Aorta (tissue), 5 donors: ENCODE measurements at regions of chr5 and their contacts with region 1.

Region 1: GRCh38 chr5:142922223-142922952 is 152.2 kb downstream of the ARHGAP26 start:
- DNase-seq: no peak
- ATAC-seq: peak; percentile 75
- H3K4me3 ChIP-seq: no peak overlapping the region
- H3K27ac ChIP-seq: no peak overlapping the region
- H3K4me1 ChIP-seq: peaks cover 0 to 2% of the 10 kb centered on the region in 2 donors
- H3K27me3 ChIP-seq: no peaks in the 10 kb centered on the region

Region 2: GRCh38 chr5:143041972-143042770 is 119.8 kb after region 1 on chr5:
- intact Hi-C with region 1: no loop called
- DNase-seq: no peak
- ATAC-seq: peak; percentile 59
- H3K4me3 ChIP-seq: no peak overlapping the region
- H3K27ac ChIP-seq: no peak overlapping the region
- H3K4me1 ChIP-seq: no peaks in the 10 kb centered on the region
- H3K27me3 ChIP-seq: no peaks in the 10 kb centered on the region

Region 3: GRCh38 chr5:143213851-143214363 is 291.5 kb after region 1 on chr5:
- intact Hi-C with region 1: no loop called
- DNase-seq: no peak
- ATAC-seq: no peak
- H3K4me3 ChIP-seq: no peak overlapping the region
- H3K27ac ChIP-seq: no peak overlapping the region
- H3K4me1 ChIP-seq: peaks cover 0 to 3% of the 10 kb centered on the region in 2 donors
- H3K27me3 ChIP-seq: no peaks in the 10 kb centered on the region

Region 4: DNA sequence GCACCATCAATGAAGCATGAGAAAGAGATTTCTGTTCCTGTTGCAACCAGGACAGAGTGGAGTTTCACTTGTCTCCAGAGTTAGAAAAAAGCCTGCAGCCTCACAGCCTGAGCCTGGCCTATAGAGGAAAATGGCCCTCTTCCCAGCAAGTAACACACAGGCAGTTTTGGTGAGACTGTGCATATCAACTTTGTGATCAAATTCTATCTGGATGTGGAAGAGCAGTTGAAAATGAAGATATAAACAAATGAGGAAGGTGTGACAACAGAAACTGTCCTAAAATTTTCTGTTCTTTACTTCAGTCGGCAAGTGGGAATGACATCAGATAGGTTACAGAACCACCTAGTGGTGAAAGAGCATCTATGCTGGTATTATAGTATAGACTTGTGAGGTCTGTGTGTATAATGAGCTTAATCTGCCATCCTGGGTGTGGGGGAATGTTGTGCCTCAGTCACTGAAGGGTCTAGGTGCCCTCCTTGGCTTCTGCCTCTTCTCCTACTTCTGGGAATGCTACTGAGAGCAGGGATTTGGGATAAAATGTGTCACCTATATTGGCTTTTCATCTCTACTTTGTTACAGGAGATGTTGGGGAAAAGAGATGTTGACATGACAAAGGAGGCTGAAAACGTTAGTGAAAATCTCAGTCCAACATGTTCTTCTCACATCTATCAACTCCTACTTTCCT is 1219.9 kb after region 1 on chr5:
- intact Hi-C with region 1: loop called in 1 of 2 experiments (anchors 10 kb)
- DNase-seq: no peak
- ATAC-seq: no peak
- H3K4me3 ChIP-seq: no peak overlapping the region
- H3K27ac ChIP-seq: no peak overlapping the region
- H3K4me1 ChIP-seq: no peaks in the 10 kb centered on the region
- H3K27me3 ChIP-seq: no peaks in the 10 kb centered on the region